ENCODE measurements at regions of chr1 and their contacts with region 1.

Region 1: DNA sequence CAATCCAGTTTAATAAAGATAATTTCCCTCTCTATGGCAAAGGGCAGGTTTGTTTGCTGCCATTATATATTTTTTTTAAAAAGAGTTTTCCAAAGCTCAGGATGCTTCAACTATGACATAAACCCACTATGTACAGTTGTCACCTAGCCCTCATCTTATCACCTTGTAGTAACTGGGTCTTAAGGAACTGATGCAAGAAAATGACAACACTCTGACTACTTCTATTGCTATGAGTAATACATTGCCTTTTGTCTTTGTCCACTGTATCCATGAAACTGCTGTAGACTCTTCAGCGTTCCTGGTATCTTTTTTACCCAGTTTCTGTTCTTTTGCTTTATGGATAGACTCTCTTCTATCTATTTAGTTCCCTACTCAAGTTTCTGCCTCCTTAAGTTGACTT is 586.5 kb downstream of the NEGR1 start:
- DNase-seq: no peak
- H3K4me3 ChIP-seq: no peak overlapping the region
- H3K27ac ChIP-seq: no peak overlapping the region
- H3K4me1 ChIP-seq: no peaks in the 10 kb centered on the region
- H3K27me3 ChIP-seq: no peaks in the 10 kb centered on the region
- CTCF ChIP-seq: no peak

Region 2: DNA sequence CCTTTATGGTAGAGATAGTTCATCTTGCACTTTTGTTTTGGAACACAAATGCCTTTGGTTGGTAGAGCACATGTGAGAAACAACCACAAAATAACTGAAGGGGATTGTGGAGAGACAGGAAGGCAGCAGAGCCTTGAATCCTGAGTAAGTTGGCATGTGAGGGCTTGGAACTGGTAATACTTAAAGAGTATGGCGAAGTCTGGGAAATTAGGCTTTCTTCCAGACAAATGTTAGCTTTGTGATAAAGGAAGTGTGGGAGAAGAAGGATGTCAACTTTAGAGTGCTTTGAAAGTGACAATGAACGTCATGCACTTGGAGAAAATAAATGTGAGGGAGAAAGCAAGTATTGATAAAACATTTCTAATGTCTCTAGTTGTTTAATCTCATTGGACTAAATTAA is 138.7 kb before region 1 on chr1:
- CTCF ChIA-PET with region 1: no interaction called
- POLR2A ChIA-PET with region 1: no interaction called
- intact Hi-C with region 1: no loop called
- DNase-seq: no peak
- H3K4me3 ChIP-seq: no peak overlapping the region
- H3K27ac ChIP-seq: no peak overlapping the region
- H3K4me1 ChIP-seq: no peaks in the 10 kb centered on the region
- H3K27me3 ChIP-seq: no peaks in the 10 kb centered on the region
- CTCF ChIP-seq: no peak

Region 3: DNA sequence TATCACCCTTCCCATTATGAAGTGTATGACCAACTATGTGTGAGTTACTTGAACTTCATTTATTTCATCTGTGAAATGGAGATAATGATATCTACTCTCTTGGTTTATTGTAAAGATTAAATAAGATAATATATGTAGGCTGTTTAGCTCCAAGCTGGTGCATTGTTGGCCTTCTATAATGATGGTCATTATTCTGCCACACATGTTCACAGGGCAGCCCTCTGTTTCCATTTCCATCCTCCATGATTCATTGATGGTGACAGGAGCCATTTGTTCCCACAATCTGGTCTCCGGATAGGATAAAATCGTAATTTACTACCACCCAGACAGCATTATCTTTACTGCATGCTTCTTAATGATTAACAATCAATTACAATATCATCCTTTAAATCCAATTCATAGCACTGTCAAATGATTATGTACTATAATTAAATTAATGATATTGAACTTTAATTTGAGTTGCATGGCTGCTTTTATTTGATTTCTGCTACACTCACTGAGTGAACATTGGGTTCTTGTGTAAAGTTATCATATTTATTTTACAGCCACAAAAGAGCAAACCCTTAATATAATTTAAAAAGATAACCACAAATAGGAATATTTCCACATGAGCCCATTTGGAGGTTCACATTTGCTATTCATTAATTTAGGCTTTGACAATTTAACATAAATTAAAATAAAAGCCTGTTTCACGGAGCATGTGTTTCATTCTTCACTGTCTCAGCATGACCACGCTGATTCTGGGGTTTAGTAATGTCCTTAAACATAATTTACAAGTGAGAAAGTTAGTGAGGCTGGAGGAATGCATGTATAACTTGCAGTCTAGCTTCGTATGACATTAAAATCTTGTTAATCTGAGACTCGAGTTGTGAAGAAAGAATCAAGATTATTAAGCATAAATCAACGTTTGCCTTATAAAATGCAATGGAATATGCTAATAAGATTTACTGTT is 18.6 kb before region 1 on chr1:
- CTCF ChIA-PET with region 1: no interaction called
- POLR2A ChIA-PET with region 1: no interaction called
- intact Hi-C with region 1: loop called (anchors 2 kb)
- DNase-seq: no peak
- H3K4me3 ChIP-seq: no peak overlapping the region
- H3K27ac ChIP-seq: no peak overlapping the region
- H3K4me1 ChIP-seq: no peaks in the 10 kb centered on the region
- H3K27me3 ChIP-seq: no peaks in the 10 kb centered on the region
- CTCF ChIP-seq: no peak